Activated naive CD4-positive, alpha-beta T cell treated with anti-CD3 and anti-CD28 coated beads for 36 hours (primary cell): ENCODE measurements at regions of chr5 and their contacts with region 1.

Region 1: GRCh38 chr5:133996683-133997252 is 8.0 kb downstream of the VDAC1 start:
- DNase-seq: no peak
- H3K4me3 Mint-ChIP-seq: no peak overlapping the region
- H3K27ac Mint-ChIP-seq: no peak overlapping the region
- H3K4me1 Mint-ChIP-seq: peaks cover 66% of the 10 kb centered on the region
- H3K27me3 Mint-ChIP-seq: no peaks in the 10 kb centered on the region

Region 2: GRCh38 chr5:133754575-133755169 is 242.1 kb before region 1 on chr5:
- CTCF ChIA-PET with region 1: no interaction called
- intact Hi-C with region 1: loop called (anchors 10 kb)
- DNase-seq: peak; percentile 66
- H3K4me3 Mint-ChIP-seq: no peak overlapping the region
- H3K27ac Mint-ChIP-seq: no peak overlapping the region
- H3K4me1 Mint-ChIP-seq: no peaks in the 10 kb centered on the region
- H3K27me3 Mint-ChIP-seq: peaks cover 18% of the 10 kb centered on the region